Right ventricle myocardium inferior (tissue), 1 donor: ENCODE measurements at regions of chr11 and their contacts with region 1.

Region 1: DNA sequence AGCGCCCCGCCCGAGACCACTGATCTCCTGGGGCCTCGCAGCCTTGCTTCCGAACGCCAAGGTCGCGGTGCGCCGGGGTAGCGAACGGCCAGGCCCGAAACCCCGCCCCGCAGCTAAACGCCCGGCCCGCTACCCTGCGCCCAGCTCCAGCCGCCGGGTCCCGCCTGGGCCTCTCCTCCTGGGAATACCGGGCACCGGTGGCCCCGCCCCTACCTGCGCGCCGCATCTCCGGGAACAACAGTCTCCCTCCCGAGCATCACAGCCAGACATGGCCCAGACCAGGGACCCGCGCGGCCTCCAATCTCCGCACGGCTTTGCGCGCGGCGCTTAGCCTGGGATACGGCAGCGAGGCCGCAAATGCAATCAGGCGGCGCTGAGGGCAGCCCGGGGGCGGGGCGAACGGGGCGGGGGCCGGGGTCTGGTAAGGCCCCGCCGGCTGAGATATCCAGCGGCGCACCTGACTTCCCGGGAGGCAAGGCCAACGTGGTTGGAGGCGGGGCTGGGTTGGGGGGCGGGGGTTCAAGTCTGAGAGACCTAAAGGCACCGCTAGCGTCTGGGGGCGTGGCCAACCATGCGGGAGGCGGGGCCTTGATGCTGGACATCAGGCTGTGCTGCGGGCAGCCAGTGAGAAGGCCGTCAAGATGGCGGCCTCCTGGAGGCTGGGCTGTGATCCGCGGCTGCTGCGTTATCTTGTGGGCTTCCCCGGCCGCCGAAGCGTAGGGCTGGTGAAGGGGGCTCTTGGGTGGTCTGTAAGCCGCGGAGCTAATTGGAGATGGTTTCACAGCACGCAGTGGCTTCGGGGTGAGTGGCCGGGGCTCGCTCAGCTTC is at the starts of genes APIP and PDHX:
- DNase-seq: peak; percentile 98
- ATAC-seq: peak; percentile 97
- total RNA-seq, gene APIP: 24.6 TPM
- total RNA-seq, gene PDHX: 140 TPM

Region 2: DNA sequence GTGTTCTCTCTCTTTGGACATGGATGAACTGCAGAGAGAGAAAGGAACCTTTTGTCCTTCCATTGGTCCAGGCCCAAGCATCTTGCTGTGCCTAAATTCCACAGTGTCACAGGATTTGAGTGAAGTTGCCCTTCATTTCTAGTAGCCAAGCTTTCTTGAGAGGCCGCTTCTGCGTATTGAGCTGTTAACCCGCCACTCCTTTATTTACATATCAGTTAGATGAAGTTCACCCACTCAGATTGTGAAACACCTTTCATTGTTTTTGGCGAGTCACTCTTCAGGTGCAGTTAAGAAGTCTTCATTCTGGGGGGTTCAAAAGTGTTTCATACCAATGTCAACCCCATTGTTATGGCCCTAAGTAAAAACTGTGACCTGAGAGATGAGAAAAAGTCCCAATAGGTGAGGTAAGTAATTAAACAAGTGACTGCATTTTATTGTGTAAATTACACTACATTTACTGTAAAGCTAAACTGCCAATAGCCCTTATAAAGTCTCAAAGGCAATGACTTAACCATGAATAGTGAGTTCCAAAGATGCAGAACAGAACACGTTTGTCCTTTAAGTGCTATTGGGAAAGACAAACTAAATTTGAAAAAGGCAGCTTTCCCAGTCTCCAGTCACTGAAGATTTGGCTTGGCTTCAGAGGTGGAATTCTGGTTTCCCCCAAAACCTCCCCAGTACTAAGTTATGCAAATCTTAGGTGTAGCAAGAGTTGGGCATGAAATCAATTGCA is 61.0 kb before region 1 on chr11:
- intact Hi-C with region 1: no loop called
- DNase-seq: no peak
- ATAC-seq: no peak

Region 3: GRCh38 chr11:35082321-35083182 is 166.3 kb after region 1 on chr11:
- intact Hi-C with region 1: loop called (anchors 10 kb)
- DNase-seq: peak; percentile 87
- ATAC-seq: peak; percentile 63